H1 (cell line): ENCODE measurements at regions of chr5 and their contacts with region 1.

Region 1: GRCh38 chr5:34929150-34929719 is at the start of gene DNAJC21:
- DNase-seq: peak; percentile 94 to 98
- H3K4me3 ChIP-seq: peak within 1 kb of the TSS; percentile 50 to 96 (median 93)
- H3K27ac ChIP-seq: peak within 1 kb of the TSS; percentile 66
- H3K4me1 ChIP-seq: no peaks in the 10 kb centered on the region; a peak in 1 of 7 replicates
- H3K27me3 ChIP-seq: no peaks in the 10 kb centered on the region
- CTCF ChIP-seq: no peak
- EP300 ChIP-seq: no peak
- POLR2A ChIP-seq: no peak; a peak in 1 of 3 replicates
- RAD21 ChIP-seq: no peak
- total RNA-seq, gene DNAJC21: 47.5 and 51.2 TPM in 2 replicates

Region 2: DNA sequence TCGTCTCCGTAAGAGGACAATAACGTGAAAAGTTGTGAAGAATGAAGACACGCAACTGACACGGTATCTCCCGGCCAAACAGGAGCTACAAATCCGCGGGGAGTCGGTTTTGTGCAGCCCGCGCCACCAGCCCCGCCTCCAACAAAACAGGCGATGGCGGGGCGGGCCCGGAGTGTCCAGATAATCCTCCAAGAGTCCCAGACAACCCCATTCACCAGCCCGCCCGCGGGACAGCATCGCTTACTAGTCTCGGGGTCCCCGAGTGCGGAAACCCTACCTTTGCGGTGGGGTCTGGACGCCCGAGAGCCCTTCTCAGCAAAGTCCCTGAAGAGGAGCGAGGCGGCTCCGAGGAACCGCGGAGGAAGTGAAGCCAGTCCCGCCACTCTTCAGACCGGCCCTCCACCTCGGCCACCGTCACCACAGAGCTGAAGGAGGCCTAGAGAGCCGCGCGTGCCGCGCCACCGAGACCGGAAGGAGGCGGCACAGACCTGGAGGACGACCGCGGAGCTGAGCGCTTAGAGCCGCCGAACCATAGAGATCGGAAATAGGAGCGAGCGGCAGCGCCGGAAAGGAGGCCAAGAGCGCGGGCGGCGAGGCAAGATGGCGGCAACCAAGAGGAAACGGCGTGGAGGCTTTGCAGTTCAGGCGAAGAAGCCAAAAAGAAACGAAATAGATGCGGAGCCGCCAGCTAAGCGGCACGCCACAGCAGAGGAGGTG is 13.9 kb before region 1 on chr5 and contains the starts of genes BRIX1 and RAD1:
- CTCF ChIA-PET with region 1: interaction called, 3 read pairs
- POLR2A ChIA-PET with region 1: interaction called, 51 read pairs
- DNase-seq: peak; percentile 89 to 91
- H3K4me3 ChIP-seq: peak within 1 kb of the TSS; percentile 86 to 100 (median 96)
- H3K27ac ChIP-seq: peak within 1 kb of the TSS; percentile 95
- H3K4me1 ChIP-seq: peaks cover 0 to 3% (median under 1%) of the 10 kb centered on the region in 4 experiments; a peak in 1 of 7 replicates
- H3K27me3 ChIP-seq: no peaks in the 10 kb centered on the region
- CTCF ChIP-seq: peak in 1 of 3 experiments; percentile 8; a peak in 1 of 4 replicates
- EP300 ChIP-seq: 0 out of 3 replicates have a peak, but pooled peaks of 1 of the 2 experiments have one; percentile 59
- POLR2A ChIP-seq: peak; percentile 89 to 90
- RAD21 ChIP-seq: 0 out of 4 replicates have a peak, but pooled peaks of 1 of the 2 experiments have one; percentile 7
- total RNA-seq, gene BRIX1: 64.5 and 71.7 TPM in 2 replicates
- total RNA-seq, gene RAD1: 37.3 and 40.5 TPM in 2 replicates

Region 3: DNA sequence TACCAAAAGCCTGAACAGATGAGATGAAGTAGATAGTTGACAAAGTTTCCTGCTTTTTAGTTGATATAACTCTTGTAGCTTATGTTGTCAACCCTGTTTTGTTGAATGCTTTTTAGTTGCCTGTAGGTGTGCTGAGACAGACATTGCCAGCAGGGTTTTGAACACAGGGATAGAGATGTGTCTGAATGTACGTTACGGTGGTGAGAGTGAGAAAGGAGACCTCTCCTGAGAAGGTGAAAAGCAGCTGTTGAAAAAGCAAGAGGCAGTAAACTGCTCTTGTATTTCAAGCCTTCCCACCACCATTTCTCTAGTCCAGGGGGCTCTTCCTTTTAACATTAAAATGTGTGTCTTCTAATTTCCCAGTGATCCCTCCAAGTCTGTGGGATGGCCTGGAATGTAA is 14.8 kb after region 1 on chr5:
- CTCF ChIA-PET with region 1: no interaction called
- POLR2A ChIA-PET with region 1: interaction called, 12 read pairs
- DNase-seq: no peak
- H3K4me3 ChIP-seq: no peak overlapping the region
- H3K27ac ChIP-seq: no peak overlapping the region
- H3K4me1 ChIP-seq: no peaks in the 10 kb centered on the region
- H3K27me3 ChIP-seq: no peaks in the 10 kb centered on the region
- CTCF ChIP-seq: no peak
- EP300 ChIP-seq: no peak
- POLR2A ChIP-seq: no peak
- RAD21 ChIP-seq: no peak